ENCODE measurements at regions of chr3 and their contacts with region 1.

Region 1: GRCh38 chr3:194364652-194365434 is 4.7 kb downstream of the LRRC15 start:
- DNase-seq: no peak
- H3K4me3 ChIP-seq: no peak overlapping the region
- H3K27ac ChIP-seq: no peak overlapping the region
- H3K4me1 ChIP-seq: no peaks in the 10 kb centered on the region
- H3K27me3 ChIP-seq: no peaks in the 10 kb centered on the region
- CTCF ChIP-seq: no peak

Region 2: GRCh38 chr3:194283221-194284006 is 81.4 kb before region 1 on chr3:
- CTCF ChIA-PET with region 1: no interaction called
- dilution Hi-C with region 1: loop called (anchors 5 kb)
- in situ Hi-C with region 1: no loop called
- intact Hi-C with region 1: no loop called
- DNase-seq: no peak
- H3K4me3 ChIP-seq: no peak overlapping the region
- H3K27ac ChIP-seq: no peak overlapping the region
- H3K4me1 ChIP-seq: peaks cover 6% of the 10 kb centered on the region
- H3K27me3 ChIP-seq: no peaks in the 10 kb centered on the region
- CTCF ChIP-seq: no peak

Region 3: DNA sequence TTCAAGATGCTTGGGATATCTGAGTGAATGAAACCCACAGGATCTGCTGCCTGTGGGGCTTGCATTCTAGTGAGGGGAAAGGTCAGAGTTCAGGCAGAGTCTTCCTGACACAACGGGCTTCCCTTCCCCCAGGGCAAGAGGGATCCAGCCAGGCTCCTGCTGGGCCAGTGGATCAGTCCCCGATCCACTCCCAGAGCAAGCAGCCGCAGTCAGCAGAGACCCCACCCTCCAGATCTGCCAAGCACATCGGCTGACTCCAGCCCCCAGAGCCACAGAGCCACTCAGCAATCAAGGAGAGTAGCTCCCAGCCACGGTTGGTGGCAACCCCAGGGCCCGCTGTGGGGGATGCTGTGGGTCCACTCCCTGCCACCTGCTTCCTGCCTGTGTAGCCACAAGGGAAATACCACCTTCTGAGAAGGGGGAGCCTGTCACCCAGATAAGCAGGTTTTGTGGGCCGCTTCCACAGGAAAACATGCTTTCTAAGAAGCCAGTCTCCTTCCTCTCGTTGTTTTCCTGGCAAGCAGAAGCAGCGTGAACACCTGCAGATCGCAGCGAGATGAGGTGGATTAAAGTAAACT is 58.6 kb before region 1 on chr3:
- CTCF ChIA-PET with region 1: no interaction called
- dilution Hi-C with region 1: no loop called
- in situ Hi-C with region 1: no loop called
- intact Hi-C with region 1: no loop called
- DNase-seq: no peak
- H3K4me3 ChIP-seq: no peak overlapping the region
- H3K27ac ChIP-seq: no peak overlapping the region
- H3K4me1 ChIP-seq: peaks cover 11% of the 10 kb centered on the region
- H3K27me3 ChIP-seq: no peaks in the 10 kb centered on the region
- CTCF ChIP-seq: no peak

Measured in mammary epithelial cell (primary cell).